GM12878 (cell line): ENCODE measurements at regions of chr7 and their contacts with region 1.

Region 1: GRCh38 chr7:95690367-95690947 is 81.9 kb upstream of the DYNC1I1 start:
- DNase-seq: peak; percentile 8
- ATAC-seq: peak; percentile 84
- H3K4me3 ChIP-seq: no peak overlapping the region
- H3K27ac ChIP-seq: no peak overlapping the region
- H3K4me1 ChIP-seq: no peaks in the 10 kb centered on the region
- H3K27me3 ChIP-seq: no peaks in the 10 kb centered on the region
- CTCF ChIP-seq: peak; percentile 26 to 44 (median 34); a peak in 5 of 6 replicates
- EP300 ChIP-seq: no peak
- POLR2A ChIP-seq: no peak
- RAD21 ChIP-seq: peak; percentile 44

Region 2: DNA sequence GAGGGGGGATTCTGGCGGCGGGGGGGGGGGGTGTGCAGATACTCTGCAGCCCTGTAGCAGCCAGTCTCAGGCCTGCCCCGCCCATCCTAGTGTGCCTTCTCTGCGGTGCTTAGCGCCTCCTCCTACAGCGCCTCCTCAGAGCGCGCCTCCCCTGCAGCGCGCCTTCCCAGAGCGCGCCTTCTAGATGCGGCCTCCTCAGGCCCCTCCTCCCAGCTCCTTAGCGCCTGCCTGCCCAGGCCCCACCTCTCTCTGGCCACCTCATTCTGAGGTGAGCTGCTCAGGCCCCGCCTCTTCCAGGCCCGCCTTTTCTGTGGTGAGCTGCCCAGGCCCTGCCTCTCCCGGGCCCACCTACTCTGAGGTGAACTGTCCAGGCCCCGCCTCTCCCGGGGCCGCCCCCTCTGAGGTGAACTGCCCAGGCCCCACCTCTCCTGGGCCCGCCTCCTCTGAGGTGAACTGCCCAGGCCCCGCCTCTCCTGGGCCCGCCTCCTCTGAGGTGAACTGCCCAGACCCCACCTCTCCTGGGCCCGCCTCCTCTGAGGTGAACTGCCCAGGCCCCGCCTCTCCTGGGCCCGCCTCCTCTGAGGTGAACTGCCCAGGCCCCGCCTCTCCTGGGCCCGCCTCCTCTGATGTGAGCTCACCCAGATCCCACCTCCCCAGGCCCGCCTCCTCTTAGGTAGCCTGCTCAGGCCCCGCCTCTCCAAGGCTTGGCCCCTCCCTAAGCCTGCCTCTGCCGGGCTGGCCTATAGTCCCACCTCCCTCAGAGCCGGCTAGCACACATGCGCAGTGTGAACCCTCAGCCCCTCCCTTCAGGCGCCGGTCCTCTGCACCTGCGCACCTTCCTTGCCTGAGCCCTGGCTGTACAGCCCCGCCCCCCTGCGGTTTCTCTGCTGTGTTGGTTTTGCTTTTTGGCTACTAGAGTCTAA is 1032.4 kb before region 1 on chr7:
- CTCF ChIA-PET with region 1: interaction called, 4 read pairs
- POLR2A ChIA-PET with region 1: no interaction called
- RAD21 ChIA-PET with region 1: interaction called, 3 read pairs
- SMC1A ChIA-PET with region 1: no interaction called
- in situ Hi-C with region 1: no loop called
- intact Hi-C with region 1: loop called (anchors 10 kb)
- DNase-seq: peak; percentile 83
- ATAC-seq: peak; percentile 88
- H3K4me3 ChIP-seq: no peak overlapping the region
- H3K27ac ChIP-seq: no peak overlapping the region
- H3K4me1 ChIP-seq: no peaks in the 10 kb centered on the region; the same call in 1 of the 2 replicates
- H3K27me3 ChIP-seq: no peaks in the 10 kb centered on the region
- CTCF ChIP-seq: peak in 1 of 3 experiments; percentile 16; a peak in 1 of 6 replicates
- EP300 ChIP-seq: no peak
- POLR2A ChIP-seq: peak; percentile 56; the same call in 1 of the 2 replicates
- RAD21 ChIP-seq: no peak

Region 3: DNA sequence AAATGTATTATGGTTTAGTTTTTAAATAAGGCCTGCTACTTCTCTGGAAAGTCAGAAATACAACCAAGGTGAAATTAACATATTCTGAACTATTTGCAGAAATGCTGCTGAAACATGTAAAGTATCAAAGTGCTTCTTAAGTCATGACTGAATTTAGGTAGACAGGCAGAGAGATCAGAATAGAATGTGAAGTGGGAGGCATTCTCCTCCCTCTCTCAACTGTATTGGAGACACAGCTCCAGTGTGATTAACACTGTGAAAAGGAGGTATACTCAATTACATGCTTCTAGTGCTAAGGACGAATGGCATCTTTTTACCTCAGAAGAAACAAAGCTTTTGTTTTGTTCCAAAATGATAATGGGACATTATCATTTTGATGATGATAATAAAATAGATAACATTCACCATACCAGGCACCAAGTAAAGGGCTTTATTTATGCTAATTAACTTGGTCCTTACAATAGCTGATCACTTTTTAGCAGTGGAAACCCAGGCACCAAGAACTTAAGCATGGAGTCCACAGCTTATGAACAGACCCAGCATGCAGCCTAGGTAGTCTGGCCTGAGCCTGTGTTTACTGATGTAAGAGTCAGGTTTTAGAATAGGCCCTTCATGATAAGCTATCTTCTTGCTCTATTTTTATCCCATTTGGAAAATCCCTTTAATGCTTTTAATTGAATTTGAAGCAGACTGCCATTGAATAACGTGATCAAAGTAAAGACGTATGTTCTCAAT is 757.0 kb before region 1 on chr7:
- CTCF ChIA-PET with region 1: no interaction called
- POLR2A ChIA-PET with region 1: no interaction called
- RAD21 ChIA-PET with region 1: no interaction called
- SMC1A ChIA-PET with region 1: no interaction called
- in situ Hi-C with region 1: no loop called
- intact Hi-C with region 1: no loop called
- DNase-seq: no peak
- ATAC-seq: no peak
- H3K4me3 ChIP-seq: no peak overlapping the region
- H3K27ac ChIP-seq: no peak overlapping the region
- H3K4me1 ChIP-seq: no peaks in the 10 kb centered on the region
- H3K27me3 ChIP-seq: no peaks in the 10 kb centered on the region
- CTCF ChIP-seq: no peak
- EP300 ChIP-seq: no peak
- POLR2A ChIP-seq: no peak
- RAD21 ChIP-seq: no peak

Region 4: DNA sequence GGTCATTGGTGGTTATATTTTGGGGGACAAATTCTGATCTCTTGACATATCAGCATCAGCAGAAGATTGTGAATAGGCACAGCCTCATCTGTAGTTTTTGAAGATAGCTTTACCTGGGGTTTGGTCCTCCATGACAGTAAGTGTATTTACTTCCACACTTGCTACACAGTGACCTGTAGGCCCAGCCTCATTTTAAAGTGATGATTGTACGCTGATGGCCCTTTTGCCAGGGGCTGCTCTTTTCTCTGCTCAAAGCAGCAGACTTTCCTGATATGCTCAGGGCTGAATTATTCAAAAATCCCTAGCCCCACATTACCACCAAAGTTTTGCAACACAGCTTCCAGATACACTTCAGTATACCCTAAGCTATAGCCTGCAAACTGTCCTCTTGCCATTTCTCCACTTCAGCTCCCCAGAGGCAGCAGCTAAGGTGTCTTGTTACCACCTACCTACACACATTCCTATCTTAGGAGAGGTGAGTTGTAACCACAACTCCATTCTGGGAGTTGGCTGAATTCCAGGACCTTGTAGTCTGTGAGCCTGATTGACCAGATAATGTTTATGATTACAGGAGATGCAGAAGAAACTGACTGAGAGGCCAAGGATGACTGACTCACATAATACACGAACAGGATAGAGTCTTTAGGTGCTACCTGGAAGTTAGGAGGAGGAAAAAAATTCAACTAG is 198.7 kb before region 1 on chr7:
- CTCF ChIA-PET with region 1: interaction called, 10 read pairs
- POLR2A ChIA-PET with region 1: no interaction called
- RAD21 ChIA-PET with region 1: interaction called, 4 read pairs
- SMC1A ChIA-PET with region 1: interaction called, 12 read pairs
- in situ Hi-C with region 1: no loop called
- intact Hi-C with region 1: no loop called
- DNase-seq: no peak
- ATAC-seq: no peak
- H3K4me3 ChIP-seq: no peak overlapping the region
- H3K27ac ChIP-seq: no peak overlapping the region
- H3K4me1 ChIP-seq: no peaks in the 10 kb centered on the region
- H3K27me3 ChIP-seq: no peaks in the 10 kb centered on the region
- CTCF ChIP-seq: no peak
- EP300 ChIP-seq: no peak
- POLR2A ChIP-seq: no peak
- RAD21 ChIP-seq: no peak

Region 5: GRCh38 chr7:95517458-95517857 is 173.0 kb before region 1 on chr7:
- CTCF ChIA-PET with region 1: interaction called, 655 read pairs
- POLR2A ChIA-PET with region 1: no interaction called
- RAD21 ChIA-PET with region 1: interaction called, 288 read pairs
- SMC1A ChIA-PET with region 1: interaction called, 238 read pairs
- in situ Hi-C with region 1: no loop called
- intact Hi-C with region 1: no loop called
- DNase-seq: no peak
- ATAC-seq: peak; percentile 86
- H3K4me3 ChIP-seq: no peak overlapping the region
- H3K27ac ChIP-seq: no peak overlapping the region
- H3K4me1 ChIP-seq: no peaks in the 10 kb centered on the region
- H3K27me3 ChIP-seq: no peaks in the 10 kb centered on the region
- CTCF ChIP-seq: no peak
- EP300 ChIP-seq: no peak
- POLR2A ChIP-seq: no peak
- RAD21 ChIP-seq: no peak

Region 6: GRCh38 chr7:95675016-95675415 is 15.4 kb before region 1 on chr7:
- CTCF ChIA-PET with region 1: interaction called, 50 read pairs
- POLR2A ChIA-PET with region 1: no interaction called
- RAD21 ChIA-PET with region 1: interaction called, 9 read pairs
- SMC1A ChIA-PET with region 1: interaction called, 6 read pairs
- in situ Hi-C with region 1: no loop called
- intact Hi-C with region 1: no loop called
- DNase-seq: no peak
- ATAC-seq: no peak
- H3K4me3 ChIP-seq: no peak overlapping the region
- H3K27ac ChIP-seq: no peak overlapping the region
- H3K4me1 ChIP-seq: no peaks in the 10 kb centered on the region
- H3K27me3 ChIP-seq: no peaks in the 10 kb centered on the region
- CTCF ChIP-seq: no peak
- EP300 ChIP-seq: no peak
- POLR2A ChIP-seq: no peak
- RAD21 ChIP-seq: no peak

Region 7: GRCh38 chr7:95749044-95749443 is 58.6 kb after region 1 on chr7:
- CTCF ChIA-PET with region 1: no interaction called
- POLR2A ChIA-PET with region 1: interaction called, 12 read pairs
- RAD21 ChIA-PET with region 1: no interaction called
- SMC1A ChIA-PET with region 1: no interaction called
- in situ Hi-C with region 1: no loop called
- intact Hi-C with region 1: no loop called
- DNase-seq: no peak
- ATAC-seq: no peak
- H3K4me3 ChIP-seq: no peak overlapping the region
- H3K27ac ChIP-seq: no peak overlapping the region
- H3K4me1 ChIP-seq: no peaks in the 10 kb centered on the region
- H3K27me3 ChIP-seq: no peaks in the 10 kb centered on the region
- CTCF ChIP-seq: no peak
- EP300 ChIP-seq: no peak
- POLR2A ChIP-seq: no peak
- RAD21 ChIP-seq: no peak